MCF 10A (cell line): ENCODE measurements at regions of chr14 and their contacts with region 1.

Region 1: DNA sequence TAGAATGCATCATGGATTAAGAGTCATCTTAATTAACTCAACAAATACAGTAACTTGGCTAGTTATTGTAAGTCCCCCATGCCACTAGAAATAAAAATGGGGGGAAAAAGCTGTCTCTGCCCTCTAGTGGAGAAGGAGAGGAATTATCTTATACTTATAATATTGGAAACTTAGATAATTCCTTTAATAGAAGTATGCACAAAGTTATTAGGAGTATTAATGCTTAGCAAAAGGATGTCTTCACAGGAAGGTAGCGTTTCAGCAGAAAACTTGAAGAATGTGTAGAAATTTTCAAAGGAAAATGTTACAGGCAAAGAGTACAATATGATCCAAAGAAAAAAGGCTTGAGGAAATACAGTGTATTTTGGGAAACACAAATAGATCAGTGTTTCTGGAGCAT is 19.8 kb downstream of the OR5AU1 start:
- DNase-seq: peak; percentile 16
- H3K4me3 Mint-ChIP-seq: no peak overlapping the region
- H3K27ac Mint-ChIP-seq: no peak overlapping the region
- H3K4me1 Mint-ChIP-seq: no peaks in the 10 kb centered on the region
- H3K27me3 Mint-ChIP-seq: no peaks in the 10 kb centered on the region
- CTCF ChIP-seq: peak; percentile 74

Region 2: GRCh38 chr14:20934148-20934762 is 201.8 kb before region 1 on chr14:
- CTCF ChIA-PET with region 1: no interaction called
- POLR2A ChIA-PET with region 1: no interaction called
- intact Hi-C with region 1: no loop called
- DNase-seq: peak; percentile 22
- H3K4me3 Mint-ChIP-seq: no peak overlapping the region
- H3K27ac Mint-ChIP-seq: no peak overlapping the region
- H3K4me1 Mint-ChIP-seq: no peaks in the 10 kb centered on the region
- H3K27me3 Mint-ChIP-seq: peaks cover 56% of the 10 kb centered on the region
- CTCF ChIP-seq: peak; percentile 17

Region 3: GRCh38 chr14:21121106-21121505 is 14.9 kb before region 1 on chr14:
- CTCF ChIA-PET with region 1: interaction called, 25 read pairs
- POLR2A ChIA-PET with region 1: no interaction called
- intact Hi-C with region 1: no loop called
- DNase-seq: no peak
- H3K4me3 Mint-ChIP-seq: no peak overlapping the region
- H3K27ac Mint-ChIP-seq: no peak overlapping the region
- H3K4me1 Mint-ChIP-seq: no peaks in the 10 kb centered on the region
- H3K27me3 Mint-ChIP-seq: peaks cover 6% of the 10 kb centered on the region
- CTCF ChIP-seq: no peak

Region 4: GRCh38 chr14:21149641-21150367 is 13.8 kb after region 1 on chr14:
- CTCF ChIA-PET with region 1: interaction called, 10 read pairs
- POLR2A ChIA-PET with region 1: no interaction called
- intact Hi-C with region 1: no loop called
- DNase-seq: no peak
- H3K4me3 Mint-ChIP-seq: no peak overlapping the region
- H3K27ac Mint-ChIP-seq: no peak overlapping the region
- H3K4me1 Mint-ChIP-seq: no peaks in the 10 kb centered on the region
- H3K27me3 Mint-ChIP-seq: peaks cover 23% of the 10 kb centered on the region
- CTCF ChIP-seq: no peak

Region 5: GRCh38 chr14:21437063-21437901 is 301.3 kb after region 1 on chr14:
- CTCF ChIA-PET with region 1: no interaction called
- POLR2A ChIA-PET with region 1: no interaction called
- intact Hi-C with region 1: no loop called
- DNase-seq: peak; percentile 99
- H3K4me3 Mint-ChIP-seq: peak overlapping the region; percentile 83
- H3K27ac Mint-ChIP-seq: peak overlapping the region; percentile 93
- H3K4me1 Mint-ChIP-seq: peaks cover 26% of the 10 kb centered on the region
- H3K27me3 Mint-ChIP-seq: no peaks in the 10 kb centered on the region
- CTCF ChIP-seq: no peak